Aorta (tissue), 5 donors: ENCODE measurements at regions of chr7 and their contacts with region 1.

Region 1: GRCh38 chr7:151172273-151173141 is 5.0 kb upstream of the GBX1 start:
- DNase-seq: peak; percentile 79 to 93
- ATAC-seq: peak; percentile 92
- H3K4me3 ChIP-seq: no peak overlapping the region
- H3K27ac ChIP-seq: no peak overlapping the region
- H3K4me1 ChIP-seq: no peaks in the 10 kb centered on the region
- H3K27me3 ChIP-seq: no peaks in the 10 kb centered on the region

Region 2: DNA sequence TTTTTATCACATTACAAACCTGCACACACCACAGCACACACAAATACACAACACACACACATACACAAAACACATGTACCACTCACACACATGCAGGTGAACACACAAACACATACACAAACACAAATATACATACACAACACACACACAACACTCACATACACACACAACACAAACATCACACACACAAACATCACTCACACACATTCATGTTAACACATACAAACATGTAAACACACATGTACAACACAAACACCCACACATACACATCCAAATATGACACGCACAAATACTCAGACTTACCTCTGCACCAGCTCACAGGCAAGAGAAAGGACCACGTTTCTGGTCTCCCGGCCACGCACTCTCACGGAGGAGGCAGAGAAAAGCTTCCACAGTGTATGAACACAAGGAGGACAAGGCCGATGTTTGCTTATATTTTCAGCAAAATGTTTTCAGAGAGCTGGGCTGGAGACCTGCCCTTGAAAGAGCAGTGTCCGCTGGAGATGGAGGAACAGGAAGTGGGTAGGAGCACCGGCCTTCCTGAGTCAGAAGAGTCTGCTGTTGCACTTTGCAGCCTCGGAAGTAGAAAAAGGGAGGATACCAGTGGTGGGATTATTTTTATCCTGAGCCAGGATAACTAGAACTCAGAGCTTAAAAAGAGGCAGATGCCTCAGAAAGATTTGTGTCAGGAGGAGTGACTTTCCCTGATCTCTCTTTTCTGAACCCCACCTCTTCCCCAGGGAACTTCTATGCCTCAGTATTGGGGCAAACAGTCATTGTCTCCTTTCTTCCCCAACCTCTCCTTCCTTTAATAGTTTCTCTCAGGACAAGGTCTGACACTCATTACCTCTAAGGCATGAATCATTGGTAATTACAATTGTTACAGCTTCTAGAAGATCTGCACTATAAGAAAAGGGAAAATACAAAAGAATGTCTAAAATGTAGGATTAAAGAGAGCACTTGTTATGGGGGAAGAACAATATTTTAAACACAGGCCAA is 540.3 kb before region 1 on chr7 and contains the start of gene GIMAP6:
- intact Hi-C with region 1: no loop called
- DNase-seq: peak in 1 of 2 donors; percentile 55
- ATAC-seq: peak; percentile 60
- H3K4me3 ChIP-seq: no peak within 1 kb of the TSS
- H3K27ac ChIP-seq: no peak within 1 kb of the TSS
- H3K4me1 ChIP-seq: no peaks in the 10 kb centered on the region
- H3K27me3 ChIP-seq: no peaks in the 10 kb centered on the region
- total RNA-seq, gene GIMAP6: 31.7 to 49.2 TPM

Region 3: DNA sequence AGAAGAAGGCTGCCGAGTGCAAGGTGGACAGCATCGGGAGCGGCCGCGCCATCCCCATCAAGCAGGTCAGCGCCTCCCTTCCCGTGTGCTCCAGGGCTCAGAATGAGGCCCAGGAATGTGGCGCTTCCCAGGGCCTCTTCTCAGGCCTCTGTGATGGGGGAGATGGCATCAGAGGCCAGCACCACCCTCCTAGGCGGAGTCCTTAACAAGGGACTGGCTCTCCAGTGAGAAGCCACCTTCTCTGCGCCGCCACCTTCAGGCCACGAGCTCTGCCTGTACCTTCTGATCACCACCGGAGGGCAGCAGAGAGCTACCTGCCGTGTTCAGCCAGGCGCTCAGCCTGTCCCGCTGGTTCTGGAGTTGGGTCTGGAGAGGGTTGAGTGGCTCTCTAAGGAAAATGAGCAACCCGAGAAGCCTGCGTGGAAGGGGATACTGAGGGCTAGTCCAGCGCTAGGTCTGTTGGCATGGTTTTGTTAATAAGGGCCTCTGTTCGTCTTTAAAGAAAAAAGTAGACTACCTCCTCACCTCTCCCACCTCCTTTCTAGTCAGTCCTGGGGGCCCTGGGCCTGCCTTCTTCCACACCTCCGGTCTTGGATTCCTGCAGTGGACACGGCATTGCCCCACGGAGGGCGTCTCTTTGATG is 48.6 kb before region 1 on chr7:
- intact Hi-C with region 1: loop called (anchors 1 to 5 kb)
- DNase-seq: peak; percentile 86 to 93
- ATAC-seq: peak; percentile 87
- H3K4me3 ChIP-seq: no peak overlapping the region
- H3K27ac ChIP-seq: no peak overlapping the region
- H3K4me1 ChIP-seq: no peaks in the 10 kb centered on the region
- H3K27me3 ChIP-seq: no peaks in the 10 kb centered on the region